GM13976 (cell line): ENCODE measurements at regions of chr3 and their contacts with region 1.

Region 1: GRCh38 chr3:142993958-142994442 is 7.4 kb upstream of the U2SURP start:
- DNase-seq: peak; percentile 74
- CTCF ChIP-seq: peak; percentile 78

Region 2: DNA sequence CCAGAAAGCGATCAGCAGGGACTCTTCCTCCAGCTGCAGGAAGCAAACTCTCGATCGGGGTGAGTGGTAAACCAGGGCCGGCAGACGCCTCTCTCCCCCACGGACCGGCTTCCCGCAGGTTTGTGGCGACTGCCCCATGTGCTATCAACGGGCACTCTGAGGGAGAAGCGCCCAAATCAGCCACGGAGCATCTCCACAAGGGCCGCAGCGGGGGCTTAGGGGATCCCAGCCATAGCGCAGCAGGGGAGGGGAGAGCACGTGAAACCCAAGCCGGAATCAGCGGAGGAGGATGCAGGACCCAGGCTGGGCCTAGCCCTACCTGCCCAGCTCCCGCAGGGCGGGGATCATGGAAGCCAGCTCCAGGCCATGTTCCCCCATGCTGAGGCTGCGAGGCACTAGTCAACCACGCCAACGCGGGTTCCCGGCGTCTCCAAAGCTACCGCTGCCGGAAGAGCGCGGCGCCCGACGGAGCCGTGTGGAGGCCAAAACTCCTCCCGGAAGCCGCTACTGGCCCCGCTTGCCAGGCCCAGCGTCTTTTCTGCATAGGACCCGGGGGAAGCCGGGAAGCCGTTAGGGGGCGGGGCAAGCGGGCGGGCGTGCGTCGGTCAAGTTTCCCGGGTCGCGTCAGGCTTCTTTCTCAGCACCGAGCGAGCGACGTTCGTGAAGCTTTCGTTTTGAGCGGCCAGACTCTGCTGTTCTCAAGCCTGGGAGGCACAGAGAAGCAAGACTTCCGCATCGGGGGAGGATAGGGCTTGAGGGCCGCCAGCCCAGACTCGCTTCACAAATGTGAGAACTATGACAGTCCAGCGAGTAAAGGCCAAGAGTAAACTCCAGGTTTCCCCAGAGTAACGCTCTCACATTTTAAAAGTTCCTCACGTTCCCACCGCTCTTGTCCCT is 415.4 kb before region 1 on chr3 and contains the start of gene ATR:
- in situ Hi-C with region 1: loop called (anchors 10 kb)
- DNase-seq: peak; percentile 96
- CTCF ChIP-seq: no peak

Region 3: DNA sequence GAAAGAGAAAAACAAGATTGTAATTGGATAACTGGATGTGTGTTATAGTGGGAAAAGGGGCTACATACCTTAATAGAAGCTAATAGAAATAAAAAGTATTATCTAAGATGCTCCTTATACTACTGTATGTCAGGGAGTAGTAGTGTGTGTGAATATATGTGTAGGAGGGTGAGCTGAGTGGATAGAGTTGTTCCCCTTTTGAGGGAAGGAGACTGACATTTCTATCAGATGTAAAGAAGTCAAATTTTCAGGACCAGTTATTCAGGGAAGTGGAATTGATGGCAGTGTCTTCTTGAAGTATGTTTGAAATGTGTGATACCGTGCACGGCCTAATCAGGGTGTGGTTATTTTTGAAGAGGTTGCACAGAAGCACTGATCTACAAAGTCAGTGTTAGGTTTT is 154.2 kb before region 1 on chr3:
- in situ Hi-C with region 1: loop called (anchors 10 kb)
- DNase-seq: no peak
- CTCF ChIP-seq: no peak